CD4-positive, alpha-beta memory T cell (primary cell): ENCODE measurements at regions of chr11 and their contacts with region 1.

Region 1: GRCh38 chr11:121451986-121452608 is at the start of gene SORL1:
- DNase-seq: peak; percentile 70 to 81 (median 72)
- H3K4me3 ChIP-seq: peak within 1 kb of the TSS; percentile 82 to 90
- H3K4me3 Mint-ChIP-seq: peak within 1 kb of the TSS; percentile 93 to 100 (median 98)
- H3K27ac ChIP-seq: peak within 1 kb of the TSS; percentile 79
- H3K27ac Mint-ChIP-seq: peak within 1 kb of the TSS; percentile 91 to 98 (median 96)
- H3K4me1 ChIP-seq: peaks cover 82% of the 10 kb centered on the region
- H3K4me1 Mint-ChIP-seq: peaks cover 56 to 91% (median 69%) of the 10 kb centered on the region in 4 donors
- H3K27me3 ChIP-seq: no peaks in the 10 kb centered on the region
- H3K27me3 Mint-ChIP-seq: no peaks in the 10 kb centered on the region
- total RNA-seq, gene SORL1: 610 to 660 TPM

Region 2: DNA sequence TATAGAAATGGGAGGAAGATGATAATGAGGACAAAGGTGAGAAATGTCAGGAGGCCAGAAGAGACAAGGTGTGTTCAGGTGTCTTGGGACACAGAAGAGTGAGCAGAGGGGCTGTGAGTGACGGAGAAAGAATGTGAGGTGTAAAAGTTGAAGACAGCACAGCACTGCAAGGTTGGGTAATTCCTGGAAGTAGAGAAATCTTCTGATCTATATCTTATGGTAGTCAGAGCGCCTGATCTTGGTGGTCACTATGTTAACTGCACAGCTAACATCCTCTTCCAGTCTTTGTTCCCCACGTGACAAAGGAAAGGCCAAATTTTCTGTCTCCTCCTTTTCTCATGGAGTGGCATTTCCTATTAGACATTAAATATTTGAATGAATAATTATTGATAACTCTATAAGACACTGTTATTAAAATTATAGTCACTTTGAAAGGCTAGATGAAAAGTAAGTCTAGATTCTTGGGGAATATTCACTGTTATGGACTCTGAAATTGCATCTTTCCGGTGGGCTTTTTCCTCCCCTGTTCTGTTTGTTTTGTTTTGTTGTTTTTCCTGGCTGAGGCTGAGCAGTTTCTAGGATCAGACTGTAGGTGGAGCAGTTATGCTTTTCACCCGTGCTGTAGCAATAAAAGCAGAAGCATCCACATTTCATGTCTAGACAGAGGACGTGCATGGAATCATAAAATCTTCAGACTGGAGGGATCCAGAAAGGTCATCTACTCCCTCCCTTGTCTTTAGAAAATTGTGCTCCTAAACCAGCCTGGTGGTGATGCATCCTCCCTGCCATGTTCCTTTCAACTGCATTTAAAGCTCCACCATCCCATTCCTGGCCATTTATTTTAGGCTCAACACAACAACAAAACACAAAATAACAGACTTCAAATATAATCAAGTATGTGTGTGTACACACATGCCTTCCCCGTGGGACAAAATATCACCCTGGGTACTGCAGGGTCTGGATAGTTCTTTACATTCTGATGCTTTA is 133.0 kb before region 1 on chr11:
- CTCF ChIA-PET with region 1: interaction called, 13 read pairs
- POLR2A ChIA-PET with region 1: interaction called, 81 read pairs
- intact Hi-C with region 1: loop called (anchors 2 kb)
- DNase-seq: peak; percentile 48 to 55 (median 53)
- H3K4me3 ChIP-seq: no peak overlapping the region
- H3K4me3 Mint-ChIP-seq: no peak overlapping the region
- H3K27ac ChIP-seq: no peak overlapping the region
- H3K27ac Mint-ChIP-seq: peak overlapping the region in 3 of 7 donors; percentile 8 to 67 (median 13)
- H3K4me1 ChIP-seq: peaks cover 5% of the 10 kb centered on the region
- H3K4me1 Mint-ChIP-seq: peaks cover 17 to 21% (median 19%) of the 10 kb centered on the region in 4 donors
- H3K27me3 ChIP-seq: no peaks in the 10 kb centered on the region
- H3K27me3 Mint-ChIP-seq: peaks cover 0 to 1% of the 10 kb centered on the region in 2 donors

Region 3: DNA sequence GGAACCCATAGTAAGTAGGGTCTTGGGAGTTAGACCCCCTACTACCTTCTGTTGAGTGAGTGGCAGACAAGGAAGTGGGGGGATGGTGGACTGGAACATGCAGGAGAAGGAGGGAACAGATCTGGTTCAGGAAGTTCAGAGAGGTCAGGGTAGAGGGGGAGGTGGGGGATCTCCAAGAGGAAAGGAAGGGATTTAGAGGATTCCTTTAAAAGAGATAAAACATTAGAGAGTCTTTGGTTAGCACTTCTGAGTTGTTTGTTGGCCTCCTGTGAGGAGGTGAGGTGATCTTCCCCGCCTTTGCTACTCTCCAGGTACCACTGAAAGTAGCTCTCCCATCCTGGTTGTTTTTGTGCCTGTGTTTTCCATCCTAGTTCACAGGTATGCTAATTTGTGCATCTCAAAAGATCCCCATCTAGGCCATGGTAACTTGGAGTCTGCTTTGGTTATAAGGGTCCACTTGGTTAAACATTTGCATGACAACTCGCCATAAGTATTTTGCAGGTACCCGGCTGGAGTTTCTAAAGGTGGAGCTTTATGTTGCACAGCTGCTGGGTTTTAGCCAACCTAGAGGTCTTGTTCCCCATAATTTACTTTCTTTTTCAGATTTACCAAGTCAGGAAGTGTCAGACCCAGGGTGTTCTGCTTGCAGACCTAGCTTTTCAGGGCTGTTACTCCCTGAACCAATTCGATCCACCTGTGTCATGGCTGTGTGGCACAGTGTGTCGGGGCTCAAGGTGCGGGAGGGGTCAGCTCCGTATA is 79.2 kb before region 1 on chr11:
- CTCF ChIA-PET with region 1: interaction called, 9 read pairs
- POLR2A ChIA-PET with region 1: interaction called, 53 read pairs
- intact Hi-C with region 1: loop called (anchors 5 kb)
- DNase-seq: peak in 4 of 5 donors; percentile 12 to 32 (median 23)
- H3K4me3 ChIP-seq: no peak overlapping the region
- H3K4me3 Mint-ChIP-seq: peak overlapping the region in 7 of 8 donors; percentile 8 to 73 (median 54)
- H3K27ac ChIP-seq: no peak overlapping the region
- H3K27ac Mint-ChIP-seq: peak overlapping the region; percentile 25 to 82 (median 64)
- H3K4me1 ChIP-seq: peaks cover 62% of the 10 kb centered on the region
- H3K4me1 Mint-ChIP-seq: peaks cover 48 to 84% (median 66%) of the 10 kb centered on the region in 4 donors
- H3K27me3 ChIP-seq: no peaks in the 10 kb centered on the region
- H3K27me3 Mint-ChIP-seq: peaks cover 0 to 1% of the 10 kb centered on the region in 2 donors

Region 4: GRCh38 chr11:121426476-121427399 is 25.4 kb before region 1 on chr11:
- CTCF ChIA-PET with region 1: interaction called, 14 read pairs
- POLR2A ChIA-PET with region 1: interaction called, 150 read pairs
- intact Hi-C with region 1: no loop called
- DNase-seq: peak in 4 of 5 donors; percentile 17 to 49 (median 38)
- H3K4me3 ChIP-seq: peak overlapping the region in 1 of 2 donors; percentile 49
- H3K4me3 Mint-ChIP-seq: peak overlapping the region; percentile 70 to 85 (median 77)
- H3K27ac ChIP-seq: no peak overlapping the region
- H3K27ac Mint-ChIP-seq: peak overlapping the region in 6 of 7 donors; percentile 14 to 81 (median 70)
- H3K4me1 ChIP-seq: peaks cover 30% of the 10 kb centered on the region
- H3K4me1 Mint-ChIP-seq: peaks cover 34 to 58% (median 50%) of the 10 kb centered on the region in 4 donors
- H3K27me3 ChIP-seq: no peaks in the 10 kb centered on the region
- H3K27me3 Mint-ChIP-seq: no peaks in the 10 kb centered on the region

Region 5: GRCh38 chr11:121482231-121483129 is 30.4 kb after region 1 on chr11:
- CTCF ChIA-PET with region 1: interaction called, 15 read pairs
- POLR2A ChIA-PET with region 1: interaction called, 100 read pairs
- intact Hi-C with region 1: loop called (anchors 1 kb)
- DNase-seq: peak; percentile 67 to 89 (median 72)
- H3K4me3 ChIP-seq: peak overlapping the region; percentile 14 to 30
- H3K4me3 Mint-ChIP-seq: peak overlapping the region; percentile 75 to 86 (median 82)
- H3K27ac ChIP-seq: peak overlapping the region; percentile 53
- H3K27ac Mint-ChIP-seq: peak overlapping the region; percentile 87 to 97 (median 92)
- H3K4me1 ChIP-seq: peaks cover 71% of the 10 kb centered on the region
- H3K4me1 Mint-ChIP-seq: peaks cover 48 to 85% (median 68%) of the 10 kb centered on the region in 4 donors
- H3K27me3 ChIP-seq: no peaks in the 10 kb centered on the region
- H3K27me3 Mint-ChIP-seq: no peaks in the 10 kb centered on the region

Region 6: GRCh38 chr11:121591405-121592033 is 139.4 kb after region 1 on chr11:
- CTCF ChIA-PET with region 1: no interaction called
- POLR2A ChIA-PET with region 1: interaction called, 7 read pairs
- intact Hi-C with region 1: loop called (anchors 1 kb)
- DNase-seq: peak; percentile 69 to 75 (median 74)
- H3K4me3 ChIP-seq: no peak overlapping the region
- H3K4me3 Mint-ChIP-seq: no peak overlapping the region
- H3K27ac ChIP-seq: no peak overlapping the region
- H3K27ac Mint-ChIP-seq: peak overlapping the region in 6 of 7 donors; percentile 0 to 82 (median 60)
- H3K4me1 ChIP-seq: no peaks in the 10 kb centered on the region
- H3K4me1 Mint-ChIP-seq: peaks cover 3 to 11% (median 5%) of the 10 kb centered on the region in 4 donors
- H3K27me3 ChIP-seq: no peaks in the 10 kb centered on the region
- H3K27me3 Mint-ChIP-seq: no peaks in the 10 kb centered on the region